ENCODE measurements at regions of chr12 and their contacts with region 1.

Region 1: GRCh38 chr12:25386831-25387731 is 136.4 kb upstream of the KRAS start:
- DNase-seq: peak; percentile 88
- ATAC-seq: peak; percentile 24
- H3K4me3 Mint-ChIP-seq: peak overlapping the region; percentile 85
- H3K27ac Mint-ChIP-seq: peak overlapping the region; percentile 97
- H3K4me1 Mint-ChIP-seq: peaks cover 55% of the 10 kb centered on the region
- H3K27me3 Mint-ChIP-seq: peaks cover 3% of the 10 kb centered on the region

Region 2: DNA sequence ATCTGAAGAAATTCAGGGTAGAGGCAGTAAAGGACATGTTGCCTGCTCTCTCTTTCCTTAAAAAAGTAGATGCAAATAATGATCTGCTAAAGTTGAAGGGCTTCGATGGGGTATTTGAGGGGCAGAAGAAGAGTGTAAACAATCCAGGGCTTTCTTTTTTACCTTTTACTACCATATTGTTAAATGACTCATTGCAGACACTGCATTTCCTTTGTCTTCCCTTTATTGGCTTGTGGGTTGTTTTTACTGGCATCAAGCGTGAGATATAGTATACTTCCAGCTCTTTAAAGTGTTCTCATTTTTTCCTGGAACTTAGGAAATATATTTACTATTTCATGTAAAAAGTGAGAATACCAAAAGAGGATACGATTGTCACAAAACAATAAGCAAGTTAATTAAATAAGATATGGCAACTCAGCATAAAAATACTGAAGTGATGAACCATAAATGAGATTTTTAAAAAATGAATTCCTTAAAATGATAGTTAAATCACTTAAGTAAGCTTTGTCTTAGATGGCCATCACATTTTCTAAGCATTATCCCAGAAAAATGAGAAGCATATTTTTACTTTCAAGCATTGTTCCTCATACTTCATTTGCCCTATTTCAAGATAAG is 64.1 kb before region 1 on chr12:
- CTCF ChIA-PET with region 1: interaction called, 14 read pairs
- DNase-seq: no peak
- ATAC-seq: peak; percentile 68
- H3K4me3 Mint-ChIP-seq: peak overlapping the region; percentile 66
- H3K27ac Mint-ChIP-seq: peak overlapping the region; percentile 84
- H3K4me1 Mint-ChIP-seq: peaks cover 50% of the 10 kb centered on the region
- H3K27me3 Mint-ChIP-seq: no peaks in the 10 kb centered on the region

Measured in activated CD8-positive, alpha-beta memory T cell treated with anti-CD3 and anti-CD28 coated beads, Interleukin-2, amount 10 ng/mL, durations not matched to agents 7 days and 5 days (primary cell).